ENCODE measurements at regions of chr2 and their contacts with region 1.

Region 1: GRCh38 chr2:197378494-197379307 is 56.1 kb downstream of the SF3B1 start:
- DNase-seq: peak; percentile 48 to 59 (median 56)
- ATAC-seq: peak; percentile 83
- H3K4me3 ChIP-seq: no peak overlapping the region
- H3K27ac ChIP-seq: no peak overlapping the region
- H3K4me1 ChIP-seq: no peaks in the 10 kb centered on the region; a peak in 1 of 5 replicates
- H3K27me3 ChIP-seq: peaks cover 5 to 24% of the 10 kb centered on the region in 2 experiments; a peak in 3 of 5 replicates
- CTCF ChIP-seq: peak; percentile 65 to 77 (median 65)
- EP300 ChIP-seq: no peak
- POLR2A ChIP-seq: no peak
- RAD21 ChIP-seq: peak; percentile 78

Region 2: DNA sequence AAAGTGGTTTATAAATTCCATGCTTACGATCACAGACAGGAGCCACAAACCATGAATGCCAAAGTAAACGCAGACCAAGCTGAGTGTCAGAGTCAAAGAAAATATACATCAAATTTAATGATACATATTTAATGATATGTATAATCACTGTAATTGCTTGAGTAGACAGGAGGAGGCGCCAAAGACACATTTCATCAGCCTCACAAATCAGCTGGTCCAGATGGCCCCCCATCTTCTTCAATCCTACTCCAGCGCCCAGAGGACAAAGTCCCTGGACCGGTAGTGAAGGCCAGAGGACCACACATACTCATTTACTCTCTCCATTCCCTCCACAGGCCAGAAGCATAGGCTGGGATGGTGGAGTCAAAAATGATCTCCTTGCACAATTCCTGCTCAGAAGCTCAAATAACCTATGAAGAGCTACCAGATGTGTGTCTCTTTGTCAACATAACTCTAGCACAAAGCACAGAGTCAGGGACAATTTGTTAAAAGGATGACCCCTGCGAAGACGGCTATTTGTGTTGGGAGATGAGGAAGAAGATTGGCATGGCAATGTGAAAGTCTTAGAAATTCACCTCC is 302.9 kb before region 1 on chr2:
- CTCF ChIA-PET with region 1: interaction called, 9 read pairs
- POLR2A ChIA-PET with region 1: no interaction called
- in situ Hi-C with region 1: no loop called
- intact Hi-C with region 1: loop called (anchors 10 kb)
- DNase-seq: peak; percentile 6 to 24 (median 12)
- ATAC-seq: no peak
- H3K4me3 ChIP-seq: no peak overlapping the region
- H3K27ac ChIP-seq: no peak overlapping the region
- H3K4me1 ChIP-seq: no peaks in the 10 kb centered on the region
- H3K27me3 ChIP-seq: no peaks in the 10 kb centered on the region; a peak in 1 of 5 replicates
- CTCF ChIP-seq: peak; percentile 32 to 61 (median 53); a peak in 5 of 6 replicates
- EP300 ChIP-seq: no peak
- POLR2A ChIP-seq: no peak
- RAD21 ChIP-seq: peak in 1 of 2 experiments; percentile 52; a peak in 3 of 4 replicates

Region 3: DNA sequence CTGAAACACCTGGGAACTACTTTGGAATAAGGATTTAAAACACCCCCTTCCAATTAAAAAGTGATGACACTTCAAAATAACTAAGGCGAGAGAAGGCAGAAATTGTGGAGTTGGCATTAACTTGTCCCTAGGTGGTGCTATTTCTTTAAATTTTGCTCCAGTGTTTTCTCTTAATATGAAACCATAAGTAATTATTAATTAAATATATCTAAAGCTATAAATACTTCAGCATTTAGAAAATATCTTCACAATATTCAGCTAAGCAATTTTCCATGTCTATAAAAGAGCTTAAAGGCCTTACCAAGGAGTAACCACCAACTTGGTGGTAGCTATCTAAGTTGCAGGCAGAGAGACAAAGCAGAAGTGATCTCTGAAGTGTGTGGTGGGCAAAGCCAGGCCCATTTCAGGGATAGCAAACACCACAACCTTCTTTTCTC is 265.4 kb before region 1 on chr2:
- CTCF ChIA-PET with region 1: interaction called, 5 read pairs
- POLR2A ChIA-PET with region 1: no interaction called
- in situ Hi-C with region 1: loop called (anchors 10 kb)
- intact Hi-C with region 1: loop called (anchors 1 kb)
- DNase-seq: peak; percentile 7 to 11 (median 9)
- ATAC-seq: no peak
- H3K4me3 ChIP-seq: no peak overlapping the region
- H3K27ac ChIP-seq: no peak overlapping the region
- H3K4me1 ChIP-seq: no peaks in the 10 kb centered on the region
- H3K27me3 ChIP-seq: no peaks in the 10 kb centered on the region
- CTCF ChIP-seq: peak in 2 of 3 experiments; percentile 24 to 65; a peak in 4 of 6 replicates
- EP300 ChIP-seq: no peak
- POLR2A ChIP-seq: no peak
- RAD21 ChIP-seq: peak; percentile 53 to 62

Region 4: GRCh38 chr2:197191177-197191939 is 187.3 kb before region 1 on chr2:
- CTCF ChIA-PET with region 1: interaction called, 12 read pairs
- POLR2A ChIA-PET with region 1: no interaction called
- in situ Hi-C with region 1: loop called (anchors 5 kb)
- intact Hi-C with region 1: loop called (anchors 1 kb)
- DNase-seq: peak; percentile 26 to 35 (median 28)
- ATAC-seq: 0 out of 3 replicates have a peak, but pooled peaks have one; percentile 56
- H3K4me3 ChIP-seq: no peak overlapping the region
- H3K27ac ChIP-seq: no peak overlapping the region
- H3K4me1 ChIP-seq: no peaks in the 10 kb centered on the region
- H3K27me3 ChIP-seq: no peaks in the 10 kb centered on the region
- CTCF ChIP-seq: peak in 2 of 3 experiments; percentile 39 to 68; a peak in 4 of 6 replicates
- EP300 ChIP-seq: no peak
- POLR2A ChIP-seq: no peak
- RAD21 ChIP-seq: peak; percentile 69 to 76

Region 5: DNA sequence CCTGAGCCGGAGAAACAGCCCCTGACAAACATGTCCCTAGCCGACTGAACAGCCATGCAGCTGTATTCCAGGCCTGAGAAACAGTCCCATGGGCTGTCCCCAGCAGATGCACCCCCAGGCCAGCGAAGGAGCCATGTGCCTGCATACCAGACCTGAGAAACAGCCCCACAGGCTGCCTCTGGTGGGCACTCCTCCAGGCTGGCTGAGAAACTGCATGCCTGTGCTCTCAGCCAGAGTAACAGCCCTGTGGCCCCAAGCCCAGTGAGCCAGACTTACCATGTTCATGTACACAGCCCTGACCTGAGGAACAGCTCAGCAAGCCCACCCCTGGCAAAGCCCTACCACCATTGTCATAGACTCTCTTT is 381.6 kb after region 1 on chr2:
- CTCF ChIA-PET with region 1: no interaction called
- POLR2A ChIA-PET with region 1: no interaction called
- in situ Hi-C with region 1: loop called (anchors 25 kb)
- intact Hi-C with region 1: no loop called
- DNase-seq: no peak
- ATAC-seq: no peak
- H3K4me3 ChIP-seq: no peak overlapping the region
- H3K27ac ChIP-seq: no peak overlapping the region
- H3K4me1 ChIP-seq: no peaks in the 10 kb centered on the region
- H3K27me3 ChIP-seq: no peaks in the 10 kb centered on the region
- CTCF ChIP-seq: no peak
- EP300 ChIP-seq: no peak
- POLR2A ChIP-seq: no peak
- RAD21 ChIP-seq: no peak